ENCODE measurements at regions of chr1 and their contacts with region 1.

Region 1: GRCh38 chr1:222455188-222455879 is 92.6 kb downstream of the HHIPL2 start:
- DNase-seq: peak; percentile 93
- ATAC-seq: peak; percentile 98
- H3K4me3 ChIP-seq: no peak overlapping the region; the same call in 1 of the 2 replicates
- H3K27ac ChIP-seq: peak overlapping the region; percentile 74
- H3K4me1 ChIP-seq: peaks cover 9% of the 10 kb centered on the region
- H3K27me3 ChIP-seq: no peaks in the 10 kb centered on the region
- CTCF ChIP-seq: peak; percentile 96
- POLR2A ChIP-seq: peak; percentile 56; the same call in 1 of the 2 replicates
- RAD21 ChIP-seq: peak; percentile 99

Region 2: DNA sequence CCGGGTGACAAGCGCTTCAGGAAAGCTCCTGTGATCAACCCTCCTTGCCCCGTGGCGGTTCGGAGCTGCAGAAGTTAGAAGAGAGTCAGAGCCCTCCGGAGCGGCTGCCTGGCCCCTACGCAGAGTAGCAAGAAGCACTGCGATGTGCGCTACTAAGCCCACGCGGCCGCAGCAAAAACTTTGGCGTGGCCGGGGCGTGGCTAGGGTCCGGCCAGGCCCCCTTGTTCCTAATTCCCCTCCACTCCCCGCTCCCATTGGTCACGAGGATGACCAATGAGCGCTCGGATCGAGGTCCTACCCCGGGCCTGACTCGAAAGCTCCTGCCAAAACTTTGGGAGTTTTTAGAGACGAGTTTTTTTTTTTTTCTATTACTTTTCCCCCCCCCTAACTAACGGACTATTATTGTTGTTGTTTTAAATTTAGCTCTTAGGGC is 1576.2 kb before region 1 on chr1 and contains the start of gene HLX:
- CTCF ChIA-PET with region 1: no interaction called
- POLR2A ChIA-PET with region 1: no interaction called
- dilution Hi-C with region 1: no loop called
- in situ Hi-C with region 1: loop called (anchors 5 kb)
- intact Hi-C with region 1: loop called (anchors 10 kb)
- DNase-seq: peak; percentile 92
- ATAC-seq: peak; percentile 90
- H3K4me3 ChIP-seq: peak within 1 kb of the TSS; percentile 62
- H3K27ac ChIP-seq: peak within 1 kb of the TSS; percentile 83
- H3K4me1 ChIP-seq: peaks cover 9% of the 10 kb centered on the region
- H3K27me3 ChIP-seq: no peaks in the 10 kb centered on the region
- CTCF ChIP-seq: no peak
- POLR2A ChIP-seq: peak; percentile 59; the same call in 1 of the 2 replicates
- RAD21 ChIP-seq: no peak
- total RNA-seq, gene HLX: 3.9 and 4.3 TPM in 2 replicates

Region 3: GRCh38 chr1:221478050-221478949 is 977.0 kb before region 1 on chr1:
- CTCF ChIA-PET with region 1: interaction called, 24 read pairs
- POLR2A ChIA-PET with region 1: no interaction called
- dilution Hi-C with region 1: no loop called
- in situ Hi-C with region 1: loop called (anchors 5 kb)
- intact Hi-C with region 1: loop called (anchors 1 kb)
- DNase-seq: peak; percentile 91
- ATAC-seq: peak; percentile 100
- H3K4me3 ChIP-seq: no peak overlapping the region
- H3K27ac ChIP-seq: no peak overlapping the region
- H3K4me1 ChIP-seq: 0 out of 2 replicates have a peak, but pooled peaks cover 2% of the 10 kb centered on the region
- H3K27me3 ChIP-seq: no peaks in the 10 kb centered on the region
- CTCF ChIP-seq: peak; percentile 90
- POLR2A ChIP-seq: peak; percentile 49; the same call in 1 of the 2 replicates
- RAD21 ChIP-seq: peak; percentile 98

Region 4: GRCh38 chr1:221741711-221742554 is 713.4 kb before region 1 on chr1 and contains the start of gene DUSP10:
- CTCF ChIA-PET with region 1: interaction called, 12 read pairs
- POLR2A ChIA-PET with region 1: no interaction called
- dilution Hi-C with region 1: no loop called
- in situ Hi-C with region 1: loop called (anchors 5 kb)
- intact Hi-C with region 1: loop called (anchors 1 kb)
- DNase-seq: peak; percentile 100
- ATAC-seq: peak; percentile 93
- H3K4me3 ChIP-seq: peak within 1 kb of the TSS; percentile 74
- H3K27ac ChIP-seq: peak within 1 kb of the TSS; percentile 92
- H3K4me1 ChIP-seq: peaks cover 14% of the 10 kb centered on the region
- H3K27me3 ChIP-seq: no peaks in the 10 kb centered on the region
- CTCF ChIP-seq: 0 out of 2 replicates have a peak, but pooled peaks have one; percentile 8
- POLR2A ChIP-seq: peak; percentile 94
- RAD21 ChIP-seq: peak; percentile 49
- total RNA-seq, gene DUSP10: 59.1 and 71.4 TPM in 2 replicates

Region 5: DNA sequence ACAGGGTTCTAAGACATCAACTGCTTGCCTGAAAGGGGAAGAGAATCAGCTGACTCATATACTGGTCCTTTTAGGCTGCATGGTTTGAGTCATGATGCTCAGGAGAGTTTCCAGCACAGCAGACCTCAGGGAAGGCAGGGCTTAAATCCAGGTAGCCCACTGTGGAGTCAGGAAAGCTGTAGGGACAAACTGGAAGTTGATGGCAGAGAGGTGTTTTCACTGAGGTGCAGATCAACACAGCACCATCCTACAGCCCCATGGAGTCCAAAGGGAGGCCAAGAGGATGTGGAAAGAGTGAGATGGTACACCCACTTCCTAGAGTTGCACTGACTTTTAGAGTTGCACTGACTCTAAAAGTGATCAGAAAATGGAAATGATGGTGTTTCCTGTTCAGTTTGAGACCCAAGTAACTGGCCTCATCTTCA is 461.0 kb before region 1 on chr1:
- CTCF ChIA-PET with region 1: interaction called, 6 read pairs
- POLR2A ChIA-PET with region 1: no interaction called
- dilution Hi-C with region 1: no loop called
- in situ Hi-C with region 1: loop called (anchors 10 kb)
- intact Hi-C with region 1: loop called (anchors 10 kb)
- DNase-seq: peak; percentile 85
- ATAC-seq: 0 out of 2 replicates have a peak, but pooled peaks have one; percentile 22
- H3K4me3 ChIP-seq: no peak overlapping the region
- H3K27ac ChIP-seq: peak overlapping the region; percentile 61
- H3K4me1 ChIP-seq: peaks cover 37% of the 10 kb centered on the region
- H3K27me3 ChIP-seq: no peaks in the 10 kb centered on the region
- CTCF ChIP-seq: no peak
- POLR2A ChIP-seq: no peak; the same call in 1 of the 2 replicates
- RAD21 ChIP-seq: no peak

Region 6: GRCh38 chr1:222171005-222171404 is 284.3 kb before region 1 on chr1:
- CTCF ChIA-PET with region 1: interaction called, 3 read pairs
- POLR2A ChIA-PET with region 1: no interaction called
- dilution Hi-C with region 1: no loop called
- in situ Hi-C with region 1: loop called (anchors 5 kb)
- intact Hi-C with region 1: loop called (anchors 2 kb)
- DNase-seq: peak; percentile 70
- ATAC-seq: peak; percentile 68
- H3K4me3 ChIP-seq: no peak overlapping the region
- H3K27ac ChIP-seq: no peak overlapping the region
- H3K4me1 ChIP-seq: peaks cover 2% of the 10 kb centered on the region
- H3K27me3 ChIP-seq: no peaks in the 10 kb centered on the region
- CTCF ChIP-seq: peak; percentile 58
- POLR2A ChIP-seq: no peak
- RAD21 ChIP-seq: peak; percentile 76

Region 7: DNA sequence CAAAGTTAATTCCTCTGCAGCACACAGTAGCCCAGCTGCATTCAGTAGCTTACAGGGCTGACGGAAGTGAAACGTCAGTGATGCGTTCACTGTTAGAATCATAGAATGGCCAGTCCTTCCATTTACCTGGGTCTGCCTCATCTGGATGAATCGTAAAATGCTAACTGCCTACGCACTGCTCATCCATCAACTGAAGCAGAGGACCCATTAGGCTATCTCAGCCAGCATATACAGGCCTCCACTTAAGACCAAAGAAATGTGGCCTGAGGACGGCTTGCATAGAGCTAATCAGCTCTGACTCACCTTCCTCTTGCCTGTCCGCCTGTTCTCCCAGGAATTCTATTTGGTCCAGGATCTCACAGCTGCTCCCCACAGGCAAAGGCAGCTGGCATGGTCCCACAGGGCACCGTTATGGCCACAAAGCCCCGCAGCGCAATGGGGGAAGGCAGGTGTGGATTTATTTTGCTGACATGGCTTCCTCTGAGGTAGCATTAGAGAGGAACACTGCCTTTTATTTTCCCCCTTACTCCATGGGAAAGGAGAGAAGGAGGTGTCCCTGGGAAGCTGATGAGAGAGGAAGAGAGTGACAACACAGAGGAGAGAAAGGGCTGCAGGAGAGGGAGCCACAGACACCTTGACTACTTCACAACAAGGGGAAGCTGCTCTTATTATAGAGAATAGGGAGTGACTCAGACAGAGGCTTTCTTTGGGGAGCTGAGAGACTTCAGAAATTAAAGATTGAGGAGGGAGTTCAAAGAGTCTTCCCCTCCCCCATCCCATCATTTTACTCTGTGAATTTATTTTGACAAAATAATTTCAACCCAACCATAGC is 85.0 kb before region 1 on chr1:
- CTCF ChIA-PET with region 1: no interaction called
- POLR2A ChIA-PET with region 1: no interaction called
- dilution Hi-C with region 1: no loop called
- in situ Hi-C with region 1: no loop called
- intact Hi-C with region 1: loop called (anchors 1 kb)
- DNase-seq: peak; percentile 97
- ATAC-seq: peak; percentile 56
- H3K4me3 ChIP-seq: no peak overlapping the region
- H3K27ac ChIP-seq: peak overlapping the region; percentile 99
- H3K4me1 ChIP-seq: peaks cover 30% of the 10 kb centered on the region
- H3K27me3 ChIP-seq: no peaks in the 10 kb centered on the region
- CTCF ChIP-seq: no peak
- POLR2A ChIP-seq: no peak
- RAD21 ChIP-seq: no peak; the same call in 1 of the 2 replicates

Region 8: DNA sequence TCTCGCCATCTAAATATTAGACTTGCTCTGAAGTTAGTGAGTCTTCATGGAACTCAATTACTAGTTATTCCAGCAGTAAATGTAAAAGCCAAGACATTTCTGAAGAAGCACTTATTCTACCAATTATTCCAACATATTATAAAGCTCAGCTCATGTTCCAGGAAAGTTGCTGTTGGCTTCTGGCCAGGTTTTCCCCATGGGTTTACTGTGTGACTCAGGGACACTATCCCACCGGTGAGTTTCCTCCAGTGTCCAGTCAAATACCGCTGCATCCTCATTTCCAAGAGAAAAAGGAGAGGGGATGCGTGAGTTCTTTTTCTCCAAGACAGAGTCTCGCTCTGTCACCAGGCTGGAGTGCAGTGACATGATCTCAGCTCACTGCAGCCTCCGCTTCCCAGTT is 101.8 kb after region 1 on chr1:
- CTCF ChIA-PET with region 1: no interaction called
- POLR2A ChIA-PET with region 1: no interaction called
- dilution Hi-C with region 1: no loop called
- in situ Hi-C with region 1: no loop called
- intact Hi-C with region 1: no loop called
- DNase-seq: peak; percentile 40
- ATAC-seq: no peak
- H3K4me3 ChIP-seq: no peak overlapping the region
- H3K27ac ChIP-seq: no peak overlapping the region
- H3K4me1 ChIP-seq: no peaks in the 10 kb centered on the region
- H3K27me3 ChIP-seq: no peaks in the 10 kb centered on the region
- CTCF ChIP-seq: no peak
- POLR2A ChIP-seq: no peak
- RAD21 ChIP-seq: no peak